HepG2 (cell line): ENCODE measurements at regions of chr7 and their contacts with region 1.

Region 1: GRCh38 chr7:138064856-138065357 is 11.4 kb upstream of the AKR1D1 start:
- DNase-seq: peak; percentile 68
- ATAC-seq: peak; percentile 66
- H3K4me3 ChIP-seq: peak overlapping the region; percentile 16 to 57 (median 48)
- H3K27ac ChIP-seq: peak overlapping the region; percentile 80
- H3K4me1 ChIP-seq: peaks cover 95% of the 10 kb centered on the region
- H3K27me3 ChIP-seq: no peaks in the 10 kb centered on the region; a peak in 1 of 5 replicates
- CTCF ChIP-seq: peak; percentile 56
- EP300 ChIP-seq: peak in 1 of 2 experiments; percentile 72; a peak in 2 of 4 replicates
- POLR2A ChIP-seq: no peak
- RAD21 ChIP-seq: no peak

Region 2: GRCh38 chr7:137923380-137923779 is 141.5 kb before region 1 on chr7:
- CTCF ChIA-PET with region 1: no interaction called
- POLR2A ChIA-PET with region 1: no interaction called
- in situ Hi-C with region 1: no loop called
- intact Hi-C with region 1: no loop called
- DNase-seq: no peak
- ATAC-seq: no peak; the same call in 2 of the 3 replicates
- H3K4me3 ChIP-seq: no peak overlapping the region
- H3K27ac ChIP-seq: no peak overlapping the region
- H3K4me1 ChIP-seq: no peaks in the 10 kb centered on the region
- H3K27me3 ChIP-seq: no peaks in the 10 kb centered on the region
- CTCF ChIP-seq: no peak
- EP300 ChIP-seq: no peak
- POLR2A ChIP-seq: no peak
- RAD21 ChIP-seq: no peak

Region 3: GRCh38 chr7:138049505-138050116 is 15.3 kb before region 1 on chr7:
- CTCF ChIA-PET with region 1: no interaction called
- POLR2A ChIA-PET with region 1: interaction called, 7 read pairs
- in situ Hi-C with region 1: no loop called
- intact Hi-C with region 1: loop called (anchors 2 kb)
- DNase-seq: peak; percentile 83
- ATAC-seq: peak; percentile 94
- H3K4me3 ChIP-seq: peak overlapping the region in 1 of 3 experiments; percentile 15; a peak in 2 of 6 replicates
- H3K27ac ChIP-seq: peak overlapping the region; percentile 81
- H3K4me1 ChIP-seq: peaks cover 48% of the 10 kb centered on the region
- H3K27me3 ChIP-seq: no peaks in the 10 kb centered on the region
- CTCF ChIP-seq: no peak
- EP300 ChIP-seq: peak in 1 of 2 experiments; percentile 80; a peak in 3 of 4 replicates
- POLR2A ChIP-seq: no peak
- RAD21 ChIP-seq: no peak

Region 4: DNA sequence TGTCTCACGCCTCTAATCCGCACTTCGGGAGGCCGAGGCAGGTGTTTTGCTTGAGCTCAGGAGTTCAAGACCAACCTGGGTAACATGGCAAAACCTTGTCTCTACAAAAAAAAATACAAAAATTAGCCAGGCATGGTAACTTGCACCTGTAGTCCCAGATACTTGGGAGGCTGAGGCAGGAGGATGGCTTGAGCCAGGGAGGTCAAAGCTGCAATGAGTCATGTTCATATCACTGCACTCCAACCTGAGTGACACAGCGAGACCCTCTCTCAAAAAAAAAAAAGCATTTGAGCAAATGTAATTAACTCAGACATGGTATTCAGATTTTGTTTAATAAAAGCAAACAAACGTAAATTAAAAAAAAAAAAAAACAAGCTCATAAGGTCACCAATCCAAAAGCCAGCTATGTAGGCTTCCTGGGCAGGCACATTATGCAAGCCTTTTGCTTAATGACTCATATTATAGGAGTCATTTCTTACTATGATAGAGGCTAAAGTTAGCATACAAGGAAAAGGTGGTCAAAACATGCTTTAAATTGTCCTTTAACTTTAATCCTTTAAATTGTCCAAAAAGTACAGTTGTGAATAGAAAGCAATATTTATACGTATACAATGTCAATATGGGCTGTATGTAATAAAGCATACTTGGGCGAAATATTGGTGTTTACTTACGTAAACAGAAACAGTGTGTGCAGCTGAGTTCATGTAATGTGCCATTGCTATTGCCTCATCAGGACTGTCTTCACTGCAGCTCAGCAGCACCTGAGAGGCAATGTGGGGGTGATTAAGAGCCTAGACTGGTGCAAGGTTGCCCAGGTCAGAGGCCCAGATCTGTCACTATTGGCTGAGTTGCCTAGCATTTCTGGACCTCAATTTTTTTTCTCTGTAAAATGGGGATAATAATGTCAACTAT is 24.4 kb after region 1 on chr7:
- CTCF ChIA-PET with region 1: no interaction called
- POLR2A ChIA-PET with region 1: interaction called, 6 read pairs
- in situ Hi-C with region 1: no loop called
- intact Hi-C with region 1: loop called (anchors 2 kb)
- DNase-seq: peak; percentile 48
- ATAC-seq: peak; percentile 61
- H3K4me3 ChIP-seq: no peak overlapping the region
- H3K27ac ChIP-seq: peak overlapping the region; percentile 36
- H3K4me1 ChIP-seq: peaks cover 50% of the 10 kb centered on the region
- H3K27me3 ChIP-seq: no peaks in the 10 kb centered on the region
- CTCF ChIP-seq: no peak
- EP300 ChIP-seq: peak in 1 of 2 experiments; percentile 66; a peak in 2 of 4 replicates
- POLR2A ChIP-seq: no peak
- RAD21 ChIP-seq: no peak

Region 5: GRCh38 chr7:138151731-138152577 is 87.0 kb after region 1 on chr7:
- CTCF ChIA-PET with region 1: no interaction called
- POLR2A ChIA-PET with region 1: interaction called, 9 read pairs
- in situ Hi-C with region 1: no loop called
- intact Hi-C with region 1: loop called (anchors 5 kb)
- DNase-seq: peak; percentile 92
- ATAC-seq: peak; percentile 92
- H3K4me3 ChIP-seq: no peak overlapping the region
- H3K27ac ChIP-seq: peak overlapping the region; percentile 84
- H3K4me1 ChIP-seq: peaks cover 43% of the 10 kb centered on the region
- H3K27me3 ChIP-seq: no peaks in the 10 kb centered on the region
- CTCF ChIP-seq: no peak
- EP300 ChIP-seq: peak; percentile 30 to 89; a peak in 2 of 4 replicates
- POLR2A ChIP-seq: no peak
- RAD21 ChIP-seq: no peak